ENCODE measurements at regions of chr21 and their contacts with region 1.

Region 1: DNA sequence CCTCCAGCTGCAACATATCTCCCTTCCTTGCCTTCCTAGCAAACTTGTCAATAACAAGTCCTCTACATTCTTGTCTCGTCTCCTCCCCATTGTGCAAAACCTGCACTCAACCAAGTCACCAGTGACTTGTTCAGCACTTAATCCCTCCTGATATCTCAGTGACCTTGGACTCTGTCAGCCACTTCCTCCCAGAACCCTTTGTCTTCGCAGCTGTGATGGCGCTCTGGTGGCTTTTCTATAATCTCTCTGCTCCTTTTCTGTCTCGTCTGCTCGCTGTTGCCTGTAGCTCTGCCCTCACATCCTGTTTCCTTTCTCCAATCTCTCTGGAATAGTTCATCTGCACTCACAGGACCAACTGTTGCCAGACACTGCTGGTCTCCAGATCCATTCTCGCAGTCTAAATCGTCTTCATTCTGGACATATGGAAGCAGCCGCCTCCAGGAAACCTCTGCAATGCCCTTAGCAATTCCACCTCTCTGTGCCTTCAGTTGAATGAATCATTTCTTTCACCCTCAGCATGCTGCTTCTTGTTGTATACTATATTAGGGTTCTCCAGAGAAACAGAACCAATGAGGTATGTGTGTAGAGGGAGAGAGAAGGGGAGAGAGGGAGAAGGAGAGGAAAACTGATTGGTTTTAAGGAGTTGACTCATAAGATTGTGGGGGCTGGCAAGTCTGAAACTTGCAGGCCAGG is 17.4 kb upstream of the IFNAR2 start:
- DNase-seq: no peak
- H3K4me3 ChIP-seq: no peak overlapping the region
- H3K27ac ChIP-seq: no peak overlapping the region
- H3K4me1 ChIP-seq: no peaks in the 10 kb centered on the region
- H3K27me3 ChIP-seq: no peaks in the 10 kb centered on the region
- CTCF ChIP-seq: no peak
- POLR2A ChIP-seq: no peak

Region 2: GRCh38 chr21:33332143-33332542 is 119.8 kb after region 1 on chr21:
- intact Hi-C with region 1: no loop called
- DNase-seq: no peak
- H3K4me3 ChIP-seq: no peak overlapping the region
- H3K27ac ChIP-seq: no peak overlapping the region
- H3K4me1 ChIP-seq: peaks cover 9 to 14% of the 10 kb centered on the region in 2 donors
- H3K27me3 ChIP-seq: no peaks in the 10 kb centered on the region
- CTCF ChIP-seq: no peak
- POLR2A ChIP-seq: no peak

Region 3: DNA sequence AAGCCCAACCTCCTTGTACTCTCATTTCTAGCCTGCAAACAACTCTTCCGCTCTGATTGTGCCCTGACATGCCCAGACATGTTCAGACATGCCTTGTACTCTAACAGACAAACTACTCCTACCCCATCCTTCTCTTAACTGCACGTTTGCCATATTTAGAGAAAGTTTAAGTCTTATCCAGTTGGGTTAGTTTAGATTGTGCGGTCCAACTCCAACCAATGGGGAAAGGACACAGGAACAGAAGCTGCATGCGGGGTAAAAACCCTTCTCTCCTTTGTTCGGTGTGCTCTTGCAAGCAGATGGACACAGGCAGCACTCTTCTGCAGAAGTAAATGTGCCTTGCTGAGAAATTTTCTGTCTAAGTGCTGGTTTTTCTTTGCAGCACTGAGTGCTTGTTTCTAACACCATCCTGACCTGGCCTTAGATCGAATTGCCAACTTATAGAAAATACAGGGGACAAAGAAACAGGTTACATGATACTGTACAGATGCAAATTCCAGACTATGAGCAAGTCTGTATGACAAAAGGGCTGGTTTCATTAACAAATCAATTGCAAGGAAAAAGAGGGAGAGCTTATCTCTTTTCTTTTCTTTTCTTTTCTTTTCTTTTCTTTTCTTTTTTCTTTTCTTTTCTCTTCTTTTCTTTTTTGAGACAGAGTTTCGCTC is 155.1 kb after region 1 on chr21:
- intact Hi-C with region 1: loop called (anchors 5 kb)
- DNase-seq: no peak
- H3K4me3 ChIP-seq: no peak overlapping the region
- H3K27ac ChIP-seq: no peak overlapping the region
- H3K4me1 ChIP-seq: no peaks in the 10 kb centered on the region
- H3K27me3 ChIP-seq: no peaks in the 10 kb centered on the region
- CTCF ChIP-seq: no peak
- POLR2A ChIP-seq: no peak